ENCODE measurements at regions of chr12 and their contacts with region 1.

Region 1: DNA sequence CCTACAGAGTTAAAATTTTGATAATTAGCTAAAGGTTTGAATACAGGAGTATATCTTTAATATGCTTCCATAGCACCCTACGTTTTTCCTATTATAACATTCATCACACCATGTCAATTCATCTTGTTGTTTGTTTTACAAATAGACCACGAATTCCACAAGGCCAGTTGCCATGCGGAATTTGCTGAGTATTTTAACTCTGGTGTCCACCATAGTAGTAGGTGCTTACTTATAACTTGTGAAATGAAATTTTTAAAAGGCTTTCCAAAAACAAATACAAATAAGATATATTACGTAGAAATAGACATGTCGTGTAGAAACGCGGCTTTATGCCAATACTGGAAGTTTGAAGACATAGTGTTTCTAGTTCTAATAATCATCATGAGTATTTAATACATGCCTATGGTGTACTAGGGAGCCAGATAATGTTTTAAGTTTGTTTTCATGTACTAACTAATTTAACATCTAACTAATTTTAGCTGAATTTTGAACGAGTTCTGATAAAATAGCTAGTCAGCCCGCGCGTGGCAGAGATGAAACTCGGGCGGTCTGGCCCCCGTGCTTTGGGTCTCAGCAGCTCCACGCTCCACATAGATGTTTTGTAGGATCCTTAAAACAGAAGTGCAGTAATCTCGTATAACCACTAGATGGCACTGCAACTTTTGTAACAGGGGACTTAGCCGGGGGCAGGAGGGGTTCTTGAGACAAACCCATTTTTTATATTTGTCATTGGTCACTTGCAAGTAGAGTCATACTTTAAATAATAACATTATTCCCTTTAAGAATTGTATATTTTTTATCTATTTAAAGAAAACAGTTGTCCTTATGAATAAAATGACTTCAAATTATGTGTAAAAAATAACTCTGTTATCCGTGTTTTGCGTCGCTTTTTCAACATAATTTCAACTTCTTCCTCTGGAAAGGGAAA is 10.2 kb downstream of the CD69 start:
- DNase-seq: peak in 4 of 10 donors; percentile 6 to 39 (median 20)
- H3K4me3 ChIP-seq: peak overlapping the region in 53 of 59 donors; percentile 0 to 61 (median 29)
- H3K27ac ChIP-seq: peak overlapping the region in 1 of 59 donors; percentile 11
- H3K27me3 ChIP-seq: no peaks in the 10 kb centered on the region
- CTCF ChIP-seq: peak; percentile 71 to 98 (median 89)

Region 2: GRCh38 chr12:9831720-9832119 is 81.2 kb after region 1 on chr12:
- intact Hi-C with region 1: no loop called
- DNase-seq: no peak
- H3K4me3 ChIP-seq: no peak overlapping the region
- H3K27ac ChIP-seq: no peak overlapping the region
- H3K27me3 ChIP-seq: peaks cover 0 to 6% (median 0%) of the 10 kb centered on the region in 45 donors
- CTCF ChIP-seq: no peak

Region 3: DNA sequence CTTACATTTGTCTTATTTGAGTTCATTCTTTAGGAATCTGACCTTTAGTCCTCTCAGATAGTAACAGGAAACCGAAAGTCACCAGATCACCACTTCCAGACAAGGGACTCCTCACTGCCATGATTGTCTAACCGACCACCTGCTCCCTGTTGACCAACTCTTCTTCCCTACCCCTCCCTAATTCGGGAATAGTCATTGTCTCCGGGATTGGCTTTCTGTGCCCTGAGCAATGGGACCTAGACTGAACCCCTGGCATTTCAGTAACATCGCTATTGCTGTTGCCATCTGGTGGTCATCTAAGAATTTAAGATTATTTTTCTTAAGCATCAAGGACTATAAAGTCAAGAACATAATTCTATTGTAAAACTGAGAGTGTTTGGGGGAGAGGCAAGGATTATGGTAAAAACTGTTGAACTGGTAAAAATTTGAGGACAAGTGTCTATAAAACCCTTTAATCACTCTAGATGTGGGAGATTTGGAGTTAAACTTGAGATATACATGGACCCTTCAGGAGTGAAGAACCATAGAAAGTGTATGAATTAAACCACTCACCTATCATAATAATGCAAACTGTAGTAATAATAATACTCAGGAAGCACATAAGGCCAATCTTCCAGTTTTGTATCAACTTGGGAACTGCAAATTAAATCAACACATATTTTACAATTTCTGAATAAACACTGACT is 175.3 kb after region 1 on chr12:
- intact Hi-C with region 1: loop called (anchors 2 to 10 kb)
- DNase-seq: no peak
- H3K4me3 ChIP-seq: peak overlapping the region in 18 of 59 donors; percentile 2 to 55 (median 25)
- H3K27ac ChIP-seq: no peak overlapping the region
- H3K27me3 ChIP-seq: peaks cover 0 to 3% (median 0%) of the 10 kb centered on the region in 45 donors
- CTCF ChIP-seq: peak in 55 of 56 donors; percentile 38 to 80 (median 57)

Region 4: DNA sequence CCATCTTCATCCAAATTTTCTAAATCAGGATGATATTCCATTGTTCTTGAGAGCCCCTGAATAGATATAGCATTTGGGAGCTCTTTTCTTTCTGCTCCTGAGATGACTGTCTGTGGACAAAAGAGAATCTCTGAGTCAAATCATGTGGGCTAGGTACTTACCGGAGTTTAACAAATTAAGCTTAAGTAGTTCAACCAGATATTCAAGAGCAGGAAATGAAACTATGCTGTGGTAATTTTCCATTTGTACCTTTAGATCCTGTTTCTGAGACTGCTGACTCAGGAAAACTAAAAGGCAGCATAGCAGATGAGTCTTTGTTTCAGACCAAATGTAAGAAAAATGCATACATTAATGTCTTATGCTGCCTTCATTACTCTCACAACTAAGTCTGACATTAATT is 379.5 kb after region 1 on chr12 and contains the start of gene CLEC7A:
- intact Hi-C with region 1: no loop called
- DNase-seq: no peak
- H3K4me3 ChIP-seq: peak within 1 kb of the TSS in 45 of 59 donors; percentile 0 to 56 (median 27)
- H3K27ac ChIP-seq: peak within 1 kb of the TSS in 45 of 59 donors; percentile 4 to 79 (median 55)
- H3K27me3 ChIP-seq: no peaks in the 10 kb centered on the region
- CTCF ChIP-seq: no peak
- total RNA-seq, gene CLEC7A: 1.4 to 20.3 (median 5.5) TPM

Measured in dorsolateral prefrontal cortex (tissue), 120 donors.